SK-N-SH (cell line): ENCODE measurements at regions of chr12 and their contacts with region 1.

Region 1: GRCh38 chr12:2944401-2945047 is 14.7 kb upstream of the TEAD4 start:
- DNase-seq: peak; percentile 74
- H3K4me3 ChIP-seq: no peak overlapping the region; a peak in 1 of 4 replicates
- H3K27ac ChIP-seq: no peak overlapping the region
- H3K4me1 ChIP-seq: no peaks in the 10 kb centered on the region
- H3K27me3 ChIP-seq: no peaks in the 10 kb centered on the region
- CTCF ChIP-seq: peak; percentile 72
- EP300 ChIP-seq: no peak
- RAD21 ChIP-seq: peak; percentile 81

Region 2: DNA sequence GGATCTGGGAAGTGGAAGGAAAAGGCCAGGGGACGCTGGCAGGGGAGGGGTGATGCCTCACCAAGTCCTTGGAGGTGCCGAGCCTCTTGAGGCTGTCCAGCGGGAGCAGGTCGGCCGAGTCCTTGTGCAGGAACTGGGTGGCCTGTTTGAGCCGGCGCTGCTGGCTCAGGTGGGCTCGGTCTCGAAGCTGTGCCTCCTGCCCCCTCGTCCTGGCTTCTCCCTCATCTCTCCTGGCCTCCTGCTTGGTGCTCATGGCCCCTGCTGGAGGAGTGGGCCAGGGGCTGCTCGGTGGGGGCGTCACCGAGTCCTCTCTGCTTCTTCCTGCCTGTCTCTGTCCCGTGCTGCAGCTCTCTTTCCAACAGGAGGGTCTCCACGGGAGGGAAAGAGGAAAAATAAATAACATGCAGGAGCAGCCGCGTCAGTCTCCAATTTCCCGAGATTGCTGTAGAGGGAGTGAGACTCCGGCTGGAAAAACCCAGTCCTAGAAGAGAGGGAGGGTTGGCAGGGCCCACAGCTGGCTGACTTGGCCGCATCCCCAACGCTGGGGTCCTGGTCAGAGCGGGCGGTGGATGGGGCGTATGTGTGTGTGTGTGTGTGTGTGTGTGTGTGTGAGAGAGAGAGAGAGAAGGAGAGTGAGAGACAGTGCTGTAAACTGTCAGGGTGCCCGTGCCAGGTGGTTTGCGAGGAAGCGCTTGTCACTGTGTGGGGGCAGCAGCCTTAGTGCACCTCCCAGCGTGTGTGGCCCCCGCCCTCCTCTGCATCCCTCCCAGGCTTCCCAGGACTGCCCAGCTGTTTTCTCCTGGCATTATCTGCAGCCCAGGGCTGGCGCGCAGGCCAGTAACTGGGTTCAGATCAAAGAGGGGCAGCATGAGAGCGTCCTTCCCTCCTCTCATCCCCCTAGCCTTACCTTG is 109.7 kb before region 1 on chr12 and contains the start of gene NRIP2:
- CTCF ChIA-PET with region 1: interaction called, 15 read pairs
- POLR2A ChIA-PET with region 1: no interaction called
- DNase-seq: peak; percentile 90
- H3K4me3 ChIP-seq: no peak within 1 kb of the TSS; a peak in 1 of 4 replicates
- H3K27ac ChIP-seq: no peak within 1 kb of the TSS
- H3K4me1 ChIP-seq: peaks cover 4 to 15% of the 10 kb centered on the region in 2 experiments; a peak in 3 of 4 replicates
- H3K27me3 ChIP-seq: no peaks in the 10 kb centered on the region
- CTCF ChIP-seq: no peak
- EP300 ChIP-seq: no peak
- RAD21 ChIP-seq: peak; percentile 26; the same call in 1 of the 2 replicates
- polyA plus RNA-seq, gene NRIP2: not detected in 2 replicates

Region 3: GRCh38 chr12:2853626-2854025 is 90.9 kb before region 1 on chr12:
- CTCF ChIA-PET with region 1: interaction called, 25 read pairs
- POLR2A ChIA-PET with region 1: no interaction called
- DNase-seq: peak; percentile 93
- H3K4me3 ChIP-seq: no peak overlapping the region; a peak in 1 of 4 replicates
- H3K27ac ChIP-seq: no peak overlapping the region
- H3K4me1 ChIP-seq: no peaks in the 10 kb centered on the region
- H3K27me3 ChIP-seq: no peaks in the 10 kb centered on the region
- CTCF ChIP-seq: peak; percentile 89
- EP300 ChIP-seq: no peak
- RAD21 ChIP-seq: peak; percentile 64

Region 4: GRCh38 chr12:2877047-2877952 is 67.2 kb before region 1 on chr12 and contains the starts of genes FOXM1 and RHNO1:
- CTCF ChIA-PET with region 1: interaction called, 33 read pairs
- POLR2A ChIA-PET with region 1: no interaction called
- DNase-seq: peak; percentile 96
- H3K4me3 ChIP-seq: peak within 1 kb of the TSS; percentile 61 to 69
- H3K27ac ChIP-seq: peak within 1 kb of the TSS; percentile 80 to 87
- H3K4me1 ChIP-seq: peaks cover 8 to 10% of the 10 kb centered on the region in 2 experiments; a peak in 2 of 4 replicates
- H3K27me3 ChIP-seq: no peaks in the 10 kb centered on the region
- CTCF ChIP-seq: 0 out of 2 replicates have a peak, but pooled peaks have one; percentile 6
- EP300 ChIP-seq: no peak
- RAD21 ChIP-seq: no peak
- polyA plus RNA-seq, gene FOXM1: 17.0 and 29.9 TPM in 2 replicates
- polyA plus RNA-seq, gene RHNO1: 28.9 and 39.5 TPM in 2 replicates

Region 5: GRCh38 chr12:2884810-2885209 is 59.7 kb before region 1 on chr12:
- CTCF ChIA-PET with region 1: interaction called, 34 read pairs
- POLR2A ChIA-PET with region 1: interaction called, 3 read pairs
- DNase-seq: no peak
- H3K4me3 ChIP-seq: no peak overlapping the region
- H3K27ac ChIP-seq: no peak overlapping the region
- H3K4me1 ChIP-seq: 0 out of 4 replicates have a peak, but pooled peaks cover 0 to under 1% of the 10 kb centered on the region in 2 experiments
- H3K27me3 ChIP-seq: no peaks in the 10 kb centered on the region
- CTCF ChIP-seq: no peak
- EP300 ChIP-seq: no peak
- RAD21 ChIP-seq: no peak

Region 6: DNA sequence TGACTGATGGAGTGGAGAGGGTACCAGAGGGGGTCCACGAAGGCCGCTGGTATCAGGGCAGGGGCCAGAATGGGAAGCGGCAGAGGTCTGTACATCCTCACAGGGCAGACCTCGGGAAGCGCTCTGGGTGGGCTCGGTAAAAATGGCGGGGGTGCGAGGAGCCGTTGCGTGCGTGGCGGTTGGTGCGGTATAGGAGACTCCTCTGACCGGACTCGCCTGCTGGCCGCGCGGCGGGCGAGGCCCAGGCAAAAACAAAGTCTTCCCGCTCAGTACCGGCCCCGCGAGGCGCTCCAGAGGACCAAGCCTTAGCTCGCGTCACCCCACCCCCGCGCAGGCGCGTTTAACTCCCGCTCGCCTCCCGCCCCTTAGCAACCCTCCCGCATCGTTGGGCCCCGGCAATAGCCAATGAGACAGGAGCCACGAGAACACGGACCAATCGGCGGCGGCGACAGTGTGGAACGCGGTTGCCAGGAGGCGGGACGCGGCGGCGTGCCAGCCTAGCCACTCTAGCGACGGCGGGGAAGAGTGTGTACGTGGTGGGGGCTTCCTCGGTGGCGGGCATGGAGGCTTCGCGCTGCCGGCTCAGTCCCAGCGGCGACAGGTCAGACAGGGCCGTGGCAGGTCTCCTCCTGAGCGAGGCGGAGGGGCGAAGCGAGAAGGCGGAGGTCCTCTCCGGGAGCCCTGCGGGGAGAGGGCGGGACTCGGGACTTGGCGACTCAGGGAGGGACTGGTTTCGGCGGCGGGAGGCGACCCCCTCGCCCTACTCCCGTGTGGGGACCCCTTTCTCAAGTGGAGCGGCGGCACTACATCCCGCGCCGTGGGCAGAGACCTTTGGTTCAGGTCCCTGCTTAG is 53.9 kb before region 1 on chr12 and contains the start of gene TULP3:
- CTCF ChIA-PET with region 1: interaction called, 34 read pairs
- POLR2A ChIA-PET with region 1: interaction called, 3 read pairs
- DNase-seq: peak; percentile 98
- H3K4me3 ChIP-seq: peak within 1 kb of the TSS; percentile 76 to 93
- H3K27ac ChIP-seq: peak within 1 kb of the TSS; percentile 86 to 91
- H3K4me1 ChIP-seq: peaks cover 9 to 26% of the 10 kb centered on the region in 2 experiments; a peak in 2 of 4 replicates
- H3K27me3 ChIP-seq: no peaks in the 10 kb centered on the region
- CTCF ChIP-seq: no peak
- EP300 ChIP-seq: no peak
- RAD21 ChIP-seq: no peak
- polyA plus RNA-seq, gene TULP3: 22.6 and 24.0 TPM in 2 replicates

Region 7: DNA sequence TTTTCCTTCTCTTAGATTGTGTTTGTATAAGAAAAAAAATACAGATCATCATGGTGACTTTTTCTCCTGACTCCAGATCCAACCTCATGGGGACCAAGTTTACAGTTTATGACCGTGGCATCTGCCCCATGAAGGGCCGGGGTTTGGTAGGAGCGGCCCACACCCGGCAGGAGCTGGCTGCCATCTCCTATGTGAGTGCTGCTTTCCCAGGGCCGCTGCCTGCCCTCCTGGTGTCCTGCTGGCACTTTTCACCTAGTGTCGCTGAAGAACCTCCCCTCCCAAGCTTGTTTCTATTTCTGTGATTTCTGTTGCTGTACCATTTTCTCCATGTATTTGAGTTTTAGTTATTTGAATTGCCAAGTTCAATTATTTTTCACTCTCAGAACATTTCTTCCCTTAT is 10.2 kb before region 1 on chr12:
- CTCF ChIA-PET with region 1: interaction called, 14 read pairs
- POLR2A ChIA-PET with region 1: no interaction called
- DNase-seq: no peak
- H3K4me3 ChIP-seq: no peak overlapping the region
- H3K27ac ChIP-seq: no peak overlapping the region
- H3K4me1 ChIP-seq: peaks cover 0 to 2% of the 10 kb centered on the region in 2 experiments; a peak in 1 of 4 replicates
- H3K27me3 ChIP-seq: no peaks in the 10 kb centered on the region
- CTCF ChIP-seq: no peak
- EP300 ChIP-seq: no peak
- RAD21 ChIP-seq: no peak

Region 8: GRCh38 chr12:3010214-3010930 is 65.8 kb after region 1 on chr12:
- CTCF ChIA-PET with region 1: no interaction called
- POLR2A ChIA-PET with region 1: no interaction called
- DNase-seq: no peak
- H3K4me3 ChIP-seq: no peak overlapping the region
- H3K27ac ChIP-seq: no peak overlapping the region
- H3K4me1 ChIP-seq: no peaks in the 10 kb centered on the region
- H3K27me3 ChIP-seq: no peaks in the 10 kb centered on the region
- CTCF ChIP-seq: no peak
- EP300 ChIP-seq: no peak
- RAD21 ChIP-seq: no peak

Region 9: GRCh38 chr12:3055704-3056685 is 111.5 kb after region 1 on chr12:
- CTCF ChIA-PET with region 1: no interaction called
- POLR2A ChIA-PET with region 1: no interaction called
- DNase-seq: no peak
- H3K4me3 ChIP-seq: no peak overlapping the region
- H3K27ac ChIP-seq: no peak overlapping the region
- H3K4me1 ChIP-seq: no peaks in the 10 kb centered on the region
- H3K27me3 ChIP-seq: no peaks in the 10 kb centered on the region
- CTCF ChIP-seq: no peak
- EP300 ChIP-seq: no peak
- RAD21 ChIP-seq: no peak

Region 10: GRCh38 chr12:3698218-3698974 is 753.9 kb after region 1 on chr12:
- CTCF ChIA-PET with region 1: no interaction called
- POLR2A ChIA-PET with region 1: no interaction called
- DNase-seq: peak; percentile 48
- H3K4me3 ChIP-seq: no peak overlapping the region
- H3K27ac ChIP-seq: peak overlapping the region; percentile 68 to 89
- H3K4me1 ChIP-seq: peaks cover 11 to 15% of the 10 kb centered on the region in 2 experiments
- H3K27me3 ChIP-seq: no peaks in the 10 kb centered on the region
- CTCF ChIP-seq: no peak
- EP300 ChIP-seq: peak; percentile 47 to 88; a peak in 3 of 4 replicates
- RAD21 ChIP-seq: no peak